Gastrocnemius medialis (tissue), 4 donors: ENCODE measurements at regions of chr19 and their contacts with region 1.

Region 1: DNA sequence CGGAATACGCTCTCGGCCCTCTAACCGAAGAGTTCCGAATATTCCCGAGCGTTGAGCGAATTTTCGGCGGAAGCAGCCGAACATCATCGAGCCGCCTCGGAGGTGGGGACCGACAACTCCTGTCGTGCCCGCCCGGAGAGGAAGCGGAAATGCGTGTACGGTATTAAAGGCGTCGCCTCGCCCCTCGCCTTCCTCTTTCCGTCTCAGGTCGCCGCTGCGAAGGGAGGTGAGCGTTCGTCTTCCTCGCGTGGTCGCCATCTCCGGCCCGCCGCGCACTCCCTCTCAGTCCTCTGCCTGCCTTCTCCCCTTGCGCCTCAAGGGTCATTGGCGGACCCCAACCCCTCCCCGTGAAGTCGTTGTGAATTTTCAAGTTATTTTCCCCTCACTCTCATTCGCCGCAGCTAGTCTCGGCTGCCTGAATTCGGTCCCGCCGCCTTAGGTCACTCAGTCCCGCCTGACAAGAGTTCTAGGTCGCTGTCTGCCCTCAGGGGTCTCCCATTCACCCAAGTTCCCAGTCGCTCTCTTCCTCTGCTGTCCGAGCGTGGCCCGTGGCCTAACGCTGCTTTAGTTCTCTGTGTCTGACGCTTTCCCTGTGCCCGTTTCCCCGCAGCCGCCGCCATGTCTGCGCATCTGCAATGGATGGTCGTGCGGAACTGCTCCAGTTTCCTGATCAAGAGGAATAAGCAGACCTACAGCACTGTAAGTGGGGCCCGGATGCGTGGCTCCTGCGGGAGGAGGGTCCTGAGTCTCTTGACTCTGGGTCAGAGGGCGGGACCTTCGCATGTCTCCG is at the start of gene RPL28:
- DNase-seq: peak; percentile 98
- ATAC-seq: peak; percentile 80 to 89
- H3K4me3 ChIP-seq: peak within 1 kb of the TSS; percentile 84 to 96 (median 88)
- H3K27ac ChIP-seq: peak within 1 kb of the TSS; percentile 90 to 98 (median 93)
- H3K4me1 ChIP-seq: peaks cover 25 to 40% of the 10 kb centered on the region in 2 donors
- H3K27me3 ChIP-seq: no peaks in the 10 kb centered on the region
- CTCF ChIP-seq: no peak
- POLR2A ChIP-seq: peak; percentile 95 to 97
- total RNA-seq, gene RPL28: 123 to 278 (median 206) TPM

Region 2: GRCh38 chr19:55258828-55259539 is 127.0 kb before region 1 on chr19 and contains the start of gene PPP6R1:
- in situ Hi-C with region 1: no loop called
- intact Hi-C with region 1: loop called (anchors 1 kb)
- DNase-seq: peak; percentile 95 to 99
- ATAC-seq: peak; percentile 97 to 98
- H3K4me3 ChIP-seq: peak within 1 kb of the TSS; percentile 74 to 90 (median 80)
- H3K27ac ChIP-seq: peak within 1 kb of the TSS; percentile 89 to 97 (median 94)
- H3K4me1 ChIP-seq: peaks cover 42 to 49% of the 10 kb centered on the region in 2 donors
- H3K27me3 ChIP-seq: no peaks in the 10 kb centered on the region
- CTCF ChIP-seq: peak in 2 of 5 experiments; percentile 38 to 52
- POLR2A ChIP-seq: peak; percentile 86 to 88
- total RNA-seq, gene PPP6R1: 14.6 to 47.9 (median 39.6) TPM

Region 3: DNA sequence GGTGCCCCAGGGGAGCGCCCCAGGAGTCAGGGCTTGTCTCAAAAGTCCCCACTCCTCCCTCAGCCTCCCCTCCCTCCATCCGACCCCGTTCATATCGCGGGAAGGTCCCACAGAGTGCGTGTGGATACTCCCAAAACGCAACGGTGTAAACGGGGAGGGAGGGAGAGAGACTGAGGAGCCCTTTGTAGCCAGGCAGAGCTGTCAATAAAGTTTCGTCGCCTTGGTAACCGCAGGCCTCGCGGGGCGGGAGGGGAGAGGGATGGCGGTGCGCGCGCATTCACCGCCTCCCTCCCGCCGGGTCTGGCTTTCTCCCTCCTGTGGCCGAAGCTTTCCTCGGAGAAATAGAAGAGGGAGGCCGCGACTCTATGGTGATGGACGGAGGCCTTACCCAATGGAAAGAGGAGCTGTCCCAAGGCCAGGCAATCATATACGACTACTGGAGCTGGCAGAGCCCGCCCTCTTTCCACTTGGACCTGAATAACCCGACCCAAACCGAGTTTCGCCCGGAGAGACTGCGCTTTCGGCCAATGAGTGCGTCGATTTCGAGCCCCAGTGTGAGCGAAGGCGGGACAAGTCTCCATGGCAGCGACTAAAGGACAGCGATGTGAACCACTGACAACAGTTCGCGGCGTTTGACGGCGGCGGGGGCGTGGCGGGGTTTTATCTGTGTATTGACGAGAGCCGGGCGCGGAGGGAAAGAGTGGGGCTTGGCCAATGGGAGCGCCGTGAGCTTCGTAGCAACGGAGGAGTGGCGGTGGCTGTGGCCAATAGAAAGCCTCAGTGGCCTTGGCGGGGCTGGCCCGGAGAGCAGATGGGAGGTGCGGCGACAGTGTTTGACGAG is 46.7 kb before region 1 on chr19 and contains the start of gene KMT5C:
- in situ Hi-C with region 1: no loop called
- intact Hi-C with region 1: loop called (anchors 1 kb)
- DNase-seq: peak; percentile 100
- ATAC-seq: peak; percentile 94 to 95
- H3K4me3 ChIP-seq: peak within 1 kb of the TSS; percentile 65 to 82 (median 75)
- H3K27ac ChIP-seq: peak within 1 kb of the TSS; percentile 83 to 97 (median 91)
- H3K4me1 ChIP-seq: peaks cover 12 to 22% of the 10 kb centered on the region in 2 donors
- H3K27me3 ChIP-seq: peaks cover 0 to 10% (median 7%) of the 10 kb centered on the region in 3 donors
- CTCF ChIP-seq: peak in 4 of 5 experiments; percentile 38 to 65 (median 52)
- POLR2A ChIP-seq: peak in 1 of 2 donors; percentile 85
- total RNA-seq, gene KMT5C: 2.5 to 5.4 (median 4.5) TPM

Region 4: GRCh38 chr19:55461259-55461973 is 75.5 kb after region 1 on chr19 and contains the start of gene ISOC2:
- in situ Hi-C with region 1: no loop called
- intact Hi-C with region 1: loop called (anchors 2 kb)
- DNase-seq: peak; percentile 100
- ATAC-seq: peak; percentile 96 to 97
- H3K4me3 ChIP-seq: peak within 1 kb of the TSS; percentile 76 to 94 (median 86)
- H3K27ac ChIP-seq: peak within 1 kb of the TSS; percentile 89 to 97 (median 94)
- H3K4me1 ChIP-seq: peaks cover 12 to 13% of the 10 kb centered on the region in 2 donors
- H3K27me3 ChIP-seq: no peaks in the 10 kb centered on the region
- CTCF ChIP-seq: no peak
- POLR2A ChIP-seq: peak; percentile 77 to 82
- total RNA-seq, gene ISOC2: 59.7 to 101 (median 88.7) TPM

Region 5: GRCh38 chr19:55653758-55654539 is 268.0 kb after region 1 on chr19:
- in situ Hi-C with region 1: no loop called
- intact Hi-C with region 1: loop called (anchors 1 kb)
- DNase-seq: peak; percentile 99 to 100
- ATAC-seq: peak; percentile 76 to 77
- H3K4me3 ChIP-seq: peak overlapping the region; percentile 75 to 98 (median 90)
- H3K27ac ChIP-seq: peak overlapping the region; percentile 98 to 100 (median 99)
- H3K4me1 ChIP-seq: peaks cover 34 to 44% of the 10 kb centered on the region in 2 donors
- H3K27me3 ChIP-seq: no peaks in the 10 kb centered on the region
- CTCF ChIP-seq: peak; percentile 95 to 100 (median 99)
- POLR2A ChIP-seq: peak; percentile 88 to 91